ENCODE measurements at regions of chr19 and their contacts with region 1.

Region 1: DNA sequence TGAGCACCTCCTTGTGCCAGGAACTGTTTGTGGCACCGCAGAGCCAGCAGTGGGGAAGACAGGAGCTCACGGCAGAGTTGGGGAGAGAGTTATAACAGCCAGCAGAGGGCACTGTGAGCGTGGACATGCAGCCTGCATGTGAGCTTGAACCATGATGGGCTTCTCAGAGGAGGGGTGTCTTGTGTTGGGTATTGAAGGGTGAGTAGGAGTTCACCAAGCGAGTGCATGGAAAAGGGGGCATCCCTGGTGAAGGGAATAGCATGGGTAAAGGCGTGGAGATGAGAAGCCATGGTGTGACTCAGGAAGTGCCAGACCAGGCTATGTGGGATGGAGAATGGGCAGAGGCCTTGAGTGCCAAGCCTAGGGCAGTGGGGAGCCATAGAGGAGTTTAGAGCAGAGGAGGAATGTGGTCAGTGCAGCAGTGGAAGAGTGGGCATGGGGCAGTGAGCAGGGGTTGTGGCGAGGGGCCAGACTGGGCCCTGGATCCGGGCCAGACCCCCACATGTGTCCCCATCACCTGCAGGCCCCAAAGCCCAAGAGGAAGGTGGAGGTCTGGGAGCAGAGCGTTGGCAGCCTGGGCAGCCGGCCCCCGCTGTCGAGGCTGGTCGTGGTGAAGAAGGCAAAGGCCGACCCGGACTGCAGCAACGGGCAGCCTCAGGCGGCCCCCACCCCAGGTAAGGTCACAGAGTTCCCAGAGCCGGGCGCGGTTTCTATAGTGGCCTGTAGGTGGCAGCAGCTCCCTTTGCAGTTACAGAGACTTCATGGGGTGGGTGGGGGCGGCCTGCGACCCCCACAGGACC is 11.8 kb upstream of the SHD start:
- DNase-seq: peak in 5 of 7 donors; percentile 48 to 72 (median 52)
- H3K4me3 ChIP-seq: no peak overlapping the region
- H3K27ac ChIP-seq: no peak overlapping the region
- H3K4me1 ChIP-seq: no peaks in the 10 kb centered on the region
- H3K27me3 ChIP-seq: no peaks in the 10 kb centered on the region
- CTCF ChIP-seq: peak; percentile 62 to 86 (median 76)
- POLR2A ChIP-seq: no peak

Region 2: DNA sequence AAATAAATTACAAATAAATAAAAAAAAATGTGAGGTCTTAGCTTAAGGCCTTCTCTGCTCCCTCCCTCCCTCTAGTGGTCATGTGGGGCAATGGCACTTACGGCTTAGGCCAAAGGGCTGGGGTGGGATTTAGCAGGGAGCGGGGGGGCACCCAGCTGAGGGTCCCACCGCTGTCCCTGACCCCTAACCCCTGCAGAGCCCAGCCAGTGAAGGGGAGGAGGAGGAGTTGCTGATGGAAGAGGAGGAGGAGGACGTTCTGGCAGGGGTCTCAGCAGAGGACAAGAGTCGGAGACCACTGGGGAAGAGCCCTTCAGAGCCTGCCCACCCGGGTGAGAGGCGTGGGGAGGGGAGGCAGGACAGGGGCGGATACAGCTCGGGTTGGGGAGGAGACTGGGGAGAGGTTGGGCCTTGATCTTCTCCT is 85.4 kb after region 1 on chr19:
- intact Hi-C with region 1: loop called (anchors 5 kb)
- DNase-seq: peak in 5 of 7 donors; percentile 36 to 68 (median 59)
- H3K4me3 ChIP-seq: no peak overlapping the region
- H3K27ac ChIP-seq: no peak overlapping the region
- H3K4me1 ChIP-seq: no peaks in the 10 kb centered on the region
- H3K27me3 ChIP-seq: no peaks in the 10 kb centered on the region
- CTCF ChIP-seq: peak; percentile 39 to 86 (median 76)
- POLR2A ChIP-seq: no peak

Region 3: GRCh38 chr19:4524808-4525562 is 257.7 kb after region 1 on chr19:
- intact Hi-C with region 1: loop called in 1 of 2 experiments (anchors 10 kb)
- DNase-seq: peak in 5 of 7 donors; percentile 57 to 74 (median 67)
- H3K4me3 ChIP-seq: no peak overlapping the region
- H3K27ac ChIP-seq: peak overlapping the region in 1 of 5 donors; percentile 22
- H3K4me1 ChIP-seq: no peaks in the 10 kb centered on the region
- H3K27me3 ChIP-seq: no peaks in the 10 kb centered on the region
- CTCF ChIP-seq: peak; percentile 35 to 69 (median 53)
- POLR2A ChIP-seq: no peak

Measured in adrenal gland (tissue), 19 donors.